MCF 10A (cell line): ENCODE measurements at regions of chr15 and their contacts with region 1.

Region 1: DNA sequence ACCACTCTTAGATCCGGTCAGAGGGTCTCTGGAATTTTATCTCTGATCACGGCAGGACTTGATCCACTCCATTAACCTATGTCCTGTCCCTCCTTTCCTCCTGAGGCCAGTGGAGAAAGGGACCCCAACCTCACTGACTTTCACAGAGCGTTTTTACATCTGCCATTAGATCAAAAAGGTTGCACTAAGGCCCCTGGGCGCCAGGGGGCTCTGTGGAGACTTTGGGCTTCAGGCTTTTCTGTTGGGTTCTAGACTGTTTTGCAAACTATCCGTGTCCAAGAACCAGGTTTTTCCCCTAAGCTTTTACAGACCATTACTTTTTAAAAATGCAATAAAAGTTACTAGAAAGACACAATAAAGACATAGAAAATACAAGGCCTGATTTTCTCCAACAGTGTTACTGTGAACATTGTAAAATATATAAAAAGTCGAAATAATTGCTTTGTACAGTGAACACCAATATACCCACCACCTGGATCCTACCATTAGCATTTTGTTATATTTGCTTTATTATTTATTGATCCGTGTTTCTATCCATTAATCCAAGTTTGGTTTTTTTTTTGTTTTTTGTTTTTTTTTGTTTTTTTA is 159.7 kb downstream of the POLR2M start:
- DNase-seq: peak; percentile 74
- H3K4me3 Mint-ChIP-seq: no peak overlapping the region
- H3K27ac Mint-ChIP-seq: no peak overlapping the region
- H3K4me1 Mint-ChIP-seq: peaks cover 7% of the 10 kb centered on the region
- H3K27me3 Mint-ChIP-seq: no peaks in the 10 kb centered on the region
- CTCF ChIP-seq: peak; percentile 80

Region 2: DNA sequence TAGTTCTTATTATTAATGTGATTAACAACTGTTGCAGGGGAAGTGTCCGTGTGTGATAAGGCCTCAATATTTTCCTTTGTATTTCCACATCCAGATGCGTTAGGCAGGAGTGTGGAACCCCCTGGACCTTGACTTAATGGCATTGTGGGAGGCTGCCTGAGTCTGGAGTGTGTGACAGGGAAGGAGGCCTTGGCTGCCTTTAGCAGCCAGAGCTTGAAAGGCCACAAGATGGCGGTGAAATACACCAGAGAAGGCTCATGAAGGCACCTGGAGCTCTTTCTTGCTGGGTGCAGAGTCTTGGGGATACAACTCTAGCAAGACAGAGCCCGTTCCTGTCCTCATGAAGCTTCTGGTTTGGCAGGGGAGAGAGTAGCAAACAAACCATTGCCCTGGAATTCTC is 122.8 kb before region 1 on chr15:
- CTCF ChIA-PET with region 1: interaction called, 138 read pairs
- POLR2A ChIA-PET with region 1: no interaction called
- intact Hi-C with region 1: no loop called
- DNase-seq: peak; percentile 14
- H3K4me3 Mint-ChIP-seq: no peak overlapping the region
- H3K27ac Mint-ChIP-seq: no peak overlapping the region
- H3K4me1 Mint-ChIP-seq: no peaks in the 10 kb centered on the region
- H3K27me3 Mint-ChIP-seq: no peaks in the 10 kb centered on the region
- CTCF ChIP-seq: no peak

Region 3: DNA sequence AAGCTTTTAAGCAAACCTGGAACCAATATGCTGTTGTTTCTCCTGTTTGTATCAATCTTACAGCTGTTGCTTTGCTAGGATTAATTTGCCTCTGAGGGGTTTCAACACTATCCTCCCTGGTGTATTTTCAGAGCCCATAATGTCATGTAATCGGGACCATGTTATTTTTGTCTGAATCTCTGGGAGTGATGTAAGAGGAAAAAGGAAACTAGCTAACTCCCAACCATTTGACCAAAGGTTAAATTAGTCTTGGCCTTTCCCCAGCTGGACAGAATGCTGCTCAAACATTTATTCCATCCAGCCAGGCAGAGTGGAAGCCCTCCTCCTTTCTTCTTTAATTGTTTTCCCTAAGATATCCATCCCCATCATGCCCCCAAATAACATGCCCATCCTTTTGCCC is 57.1 kb after region 1 on chr15:
- CTCF ChIA-PET with region 1: interaction called, 11 read pairs
- POLR2A ChIA-PET with region 1: no interaction called
- intact Hi-C with region 1: loop called (anchors 5 kb)
- DNase-seq: peak; percentile 47
- H3K4me3 Mint-ChIP-seq: no peak overlapping the region
- H3K27ac Mint-ChIP-seq: no peak overlapping the region
- H3K4me1 Mint-ChIP-seq: peaks cover 34% of the 10 kb centered on the region
- H3K27me3 Mint-ChIP-seq: no peaks in the 10 kb centered on the region
- CTCF ChIP-seq: no peak

Region 4: DNA sequence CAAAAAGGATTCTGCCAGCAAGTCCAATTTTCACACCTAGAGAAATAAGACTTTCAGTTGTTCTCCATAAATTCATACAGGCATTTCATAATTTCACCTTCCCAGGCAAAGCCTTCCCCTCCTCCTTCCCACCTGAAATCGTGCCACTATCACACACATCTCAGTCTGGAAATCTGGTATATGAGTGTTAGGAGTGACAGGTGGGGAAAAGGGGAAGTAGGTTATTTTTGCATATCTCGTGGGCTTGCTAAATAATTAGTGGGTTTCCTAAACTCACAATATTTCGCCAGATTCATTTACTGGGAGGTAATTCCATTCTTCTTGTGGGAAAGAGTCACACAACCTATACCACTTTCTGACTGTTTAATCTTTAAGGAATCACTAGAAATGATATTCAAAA is 191.8 kb after region 1 on chr15:
- CTCF ChIA-PET with region 1: interaction called, 20 read pairs
- POLR2A ChIA-PET with region 1: no interaction called
- intact Hi-C with region 1: no loop called
- DNase-seq: no peak
- H3K4me3 Mint-ChIP-seq: no peak overlapping the region
- H3K27ac Mint-ChIP-seq: no peak overlapping the region
- H3K4me1 Mint-ChIP-seq: peaks cover 8% of the 10 kb centered on the region
- H3K27me3 Mint-ChIP-seq: no peaks in the 10 kb centered on the region
- CTCF ChIP-seq: no peak